ENCODE measurements at regions of chr15 and their contacts with region 1.

Region 1: GRCh38 chr15:26242565-26243071 is 379.5 kb upstream of the ATP10A start:
- DNase-seq: no peak
- ATAC-seq: no peak
- H3K4me3 ChIP-seq: no peak overlapping the region
- H3K27ac ChIP-seq: no peak overlapping the region
- H3K4me1 ChIP-seq: no peaks in the 10 kb centered on the region
- H3K27me3 ChIP-seq: no peaks in the 10 kb centered on the region

Region 2: DNA sequence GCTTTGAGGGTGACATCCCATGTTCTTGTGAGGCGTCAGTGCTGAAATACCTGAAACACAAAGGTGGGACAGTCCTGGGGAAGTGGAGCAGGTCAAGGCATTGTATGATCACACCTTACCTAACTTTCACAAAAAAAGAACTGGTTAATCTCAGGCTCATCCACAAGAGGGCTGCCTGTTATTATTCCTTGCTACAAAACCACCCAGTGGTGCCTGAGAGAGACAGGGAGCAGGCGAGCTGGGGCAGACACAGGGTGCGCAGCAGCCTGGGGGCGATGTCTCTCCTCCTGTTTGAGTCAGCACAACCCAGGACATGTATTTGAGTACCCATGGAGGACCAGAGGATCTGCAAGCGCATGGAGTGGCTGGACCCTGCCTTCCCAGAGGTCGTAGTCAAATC is 62.7 kb before region 1 on chr15:
- intact Hi-C with region 1: loop called in 1 of 4 experiments (anchors 10 kb)
- DNase-seq: peak in 2 of 3 donors; percentile 48 to 60
- ATAC-seq: peak; percentile 77 to 89
- H3K4me3 ChIP-seq: no peak overlapping the region
- H3K27ac ChIP-seq: no peak overlapping the region
- H3K4me1 ChIP-seq: no peaks in the 10 kb centered on the region
- H3K27me3 ChIP-seq: no peaks in the 10 kb centered on the region

Region 3: DNA sequence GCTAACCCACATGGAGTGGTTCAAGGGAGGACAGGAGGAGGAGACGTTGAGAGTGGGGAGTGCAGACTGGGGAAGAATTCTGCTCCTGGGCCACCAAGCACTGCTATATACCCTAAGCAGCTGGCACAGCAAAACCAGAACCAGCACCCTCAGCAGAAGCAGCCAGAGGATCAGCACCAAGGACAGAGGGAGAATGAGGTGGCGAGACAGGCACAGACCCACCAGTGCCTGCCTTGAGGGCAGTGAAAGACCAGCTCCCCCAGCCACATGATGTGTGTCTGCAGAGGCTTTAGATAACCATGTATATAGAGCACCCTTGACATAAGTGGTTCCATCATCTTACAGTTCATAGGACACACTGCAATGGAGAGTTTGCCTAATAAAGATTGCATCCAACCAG is 211.3 kb after region 1 on chr15:
- intact Hi-C with region 1: no loop called
- DNase-seq: no peak
- ATAC-seq: peak; percentile 69 to 85
- H3K4me3 ChIP-seq: no peak overlapping the region
- H3K27ac ChIP-seq: no peak overlapping the region
- H3K4me1 ChIP-seq: no peaks in the 10 kb centered on the region
- H3K27me3 ChIP-seq: no peaks in the 10 kb centered on the region

Measured in right cardiac atrium (tissue), 5 donors.